ENCODE measurements at regions of chr9 and their contacts with region 1.

Region 1: GRCh38 chr9:112074250-112075008 is 100.7 kb downstream of the SUSD1 start:
- DNase-seq: peak in 1 of 2 experiments; percentile 89

Region 2: GRCh38 chr9:111759762-111760639 is 314.4 kb before region 1 on chr9:
- in situ Hi-C with region 1: loop called (anchors 25 kb)
- DNase-seq: peak; percentile 25 to 91